RWPE1 (cell line): ENCODE measurements at regions of chr6 and their contacts with region 1.

Region 1: DNA sequence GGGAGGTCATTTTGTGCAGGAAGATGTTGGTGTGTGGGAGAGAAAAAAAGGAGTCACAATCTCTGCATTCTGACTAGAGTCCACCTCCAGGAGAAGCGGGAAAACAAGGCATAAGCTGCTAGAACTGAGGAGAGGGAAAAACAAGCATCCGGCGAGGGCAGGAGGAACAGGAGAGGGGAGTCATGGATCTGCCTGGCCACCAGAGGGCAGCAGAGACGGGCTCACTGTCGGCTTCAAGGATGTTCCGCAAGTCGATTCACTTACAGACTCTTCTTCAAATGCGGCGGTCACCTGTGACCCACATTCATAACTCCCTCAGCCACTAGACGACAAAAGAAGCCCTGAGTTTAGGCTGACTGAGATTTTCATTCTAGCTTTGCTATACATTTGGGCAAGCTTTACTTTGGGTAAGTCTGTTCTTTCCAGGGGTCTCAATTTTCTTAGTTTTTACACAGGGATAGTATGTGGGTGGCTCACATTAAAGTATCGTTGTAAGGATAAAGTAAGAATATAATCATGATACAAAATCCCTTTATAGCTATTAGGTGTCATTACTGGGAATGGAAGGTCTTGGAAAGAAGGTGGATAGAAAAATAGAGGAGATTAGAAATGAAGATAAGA is 6.6 kb upstream of the BTNL2 start:
- DNase-seq: peak; percentile 67
- H3K27ac ChIP-seq: no peak overlapping the region
- CTCF ChIP-seq: peak; percentile 92

Region 2: DNA sequence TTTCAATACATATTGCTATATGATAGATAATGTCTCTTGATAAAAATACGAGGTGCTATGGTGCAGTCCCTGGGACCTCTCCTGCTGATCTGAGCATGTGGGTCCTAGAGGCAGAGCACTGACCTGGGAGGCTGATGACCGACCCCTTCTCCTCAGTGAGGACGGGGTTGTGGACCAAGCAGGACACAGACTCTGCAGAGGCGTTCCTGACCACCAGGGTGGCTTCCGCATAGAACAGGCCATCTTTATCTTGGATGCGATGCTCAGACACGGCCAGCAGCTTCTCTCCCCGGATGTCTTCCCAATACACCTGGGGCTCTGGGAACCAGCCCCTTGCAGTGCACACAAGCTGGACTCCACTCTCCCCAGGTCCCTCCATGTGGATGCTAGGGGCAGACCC is 10.7 kb before region 1 on chr6:
- CTCF ChIA-PET with region 1: interaction called, 12 read pairs
- POLR2A ChIA-PET with region 1: no interaction called
- DNase-seq: no peak
- H3K27ac ChIP-seq: no peak overlapping the region
- CTCF ChIP-seq: no peak

Region 3: DNA sequence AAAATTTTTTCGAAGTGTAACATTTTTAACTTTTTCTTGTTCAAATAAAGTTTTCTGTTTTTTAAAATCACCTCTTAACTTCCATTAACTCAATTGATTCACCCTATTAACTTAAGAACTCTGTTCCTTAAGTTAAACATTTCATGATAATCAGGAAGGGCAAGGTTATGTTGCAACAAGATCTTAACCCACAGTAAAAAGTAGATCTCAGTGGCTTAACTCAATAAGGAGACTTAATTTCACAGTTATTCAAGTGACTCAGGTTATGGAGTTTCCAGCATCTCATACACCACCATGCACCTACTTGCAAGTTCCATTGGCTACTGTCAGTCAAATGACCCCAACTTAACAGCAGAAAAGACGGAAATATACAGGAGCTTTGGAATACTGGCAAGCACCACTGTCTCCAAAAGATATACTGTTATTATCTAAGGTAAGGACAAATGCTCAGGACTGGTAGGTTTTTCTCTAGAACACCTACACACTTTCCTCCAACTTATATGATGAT is 241.7 kb after region 1 on chr6:
- CTCF ChIA-PET with region 1: no interaction called
- POLR2A ChIA-PET with region 1: no interaction called
- DNase-seq: no peak
- H3K27ac ChIP-seq: no peak overlapping the region
- CTCF ChIP-seq: no peak

Region 4: GRCh38 chr6:32785781-32786533 is 372.4 kb after region 1 on chr6:
- CTCF ChIA-PET with region 1: interaction called, 10 read pairs
- POLR2A ChIA-PET with region 1: no interaction called
- DNase-seq: peak; percentile 53
- H3K27ac ChIP-seq: no peak overlapping the region
- CTCF ChIP-seq: peak; percentile 51